ENCODE measurements at regions of chr17 and their contacts with region 1.

Region 1: GRCh38 chr17:31357831-31358394 is 33.6 kb upstream of the RAB11FIP4 start:
- DNase-seq: peak; percentile 47
- ATAC-seq: peak; percentile 59; the same call in 1 of the 2 replicates
- H3K4me3 ChIP-seq: no peak overlapping the region
- H3K27ac ChIP-seq: no peak overlapping the region
- H3K4me1 ChIP-seq: no peaks in the 10 kb centered on the region
- H3K27me3 ChIP-seq: no peaks in the 10 kb centered on the region
- CTCF ChIP-seq: no peak
- POLR2A ChIP-seq: no peak
- RAD21 ChIP-seq: no peak

Region 2: DNA sequence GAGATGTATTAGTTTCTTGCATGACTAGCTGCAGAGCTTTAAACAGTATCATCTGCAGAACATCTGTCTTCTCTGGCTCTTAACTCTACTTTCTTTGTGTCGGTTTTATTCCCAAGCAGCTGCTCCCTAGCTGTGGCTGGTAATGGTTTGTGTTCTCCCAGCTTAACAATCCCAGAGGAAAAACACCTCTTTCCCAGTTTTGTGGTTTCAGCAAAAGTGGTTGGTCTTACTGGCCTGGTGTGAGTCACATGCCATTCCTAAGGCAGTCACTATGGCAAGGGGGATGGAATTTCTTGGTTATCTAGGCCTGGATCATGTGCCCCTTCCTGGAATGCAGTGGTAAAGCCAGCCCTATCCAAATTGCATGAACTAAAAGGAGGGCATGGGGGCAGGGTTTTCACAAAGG is 88.3 kb before region 1 on chr17:
- CTCF ChIA-PET with region 1: no interaction called
- POLR2A ChIA-PET with region 1: no interaction called
- dilution Hi-C with region 1: no loop called
- in situ Hi-C with region 1: no loop called
- intact Hi-C with region 1: loop called (anchors 5 kb)
- DNase-seq: peak; percentile 97
- ATAC-seq: peak; percentile 92
- H3K4me3 ChIP-seq: no peak overlapping the region
- H3K27ac ChIP-seq: peak overlapping the region; percentile 41; the same call in 1 of the 2 replicates
- H3K4me1 ChIP-seq: peaks cover 8% of the 10 kb centered on the region
- H3K27me3 ChIP-seq: no peaks in the 10 kb centered on the region
- CTCF ChIP-seq: no peak
- POLR2A ChIP-seq: no peak
- RAD21 ChIP-seq: no peak